Calu3 (cell line): ENCODE measurements at regions of chr9 and their contacts with region 1.

Region 1: DNA sequence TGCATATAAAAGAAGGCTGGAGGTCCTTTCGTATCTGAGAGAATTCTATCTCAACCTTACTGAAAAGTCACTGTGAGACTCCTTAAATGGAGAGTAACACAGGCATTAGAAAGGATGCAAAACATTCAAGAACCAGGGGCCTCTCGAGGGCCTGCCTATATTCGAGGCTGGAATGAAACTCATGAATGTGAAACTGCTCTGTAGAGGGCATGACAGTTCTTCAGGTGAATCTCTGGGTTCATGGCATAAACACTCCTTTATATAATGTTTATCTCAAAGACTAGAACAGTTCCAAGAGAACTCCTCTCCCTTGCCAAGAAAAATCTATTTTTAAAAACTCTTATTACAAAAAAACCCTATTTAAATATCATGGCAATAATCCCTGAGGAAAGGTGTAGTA is 113.9 kb downstream of the SEC61B start:
- DNase-seq: no peak
- H3K4me3 Mint-ChIP-seq: no peak overlapping the region
- H3K27ac Mint-ChIP-seq: no peak overlapping the region
- H3K4me1 Mint-ChIP-seq: no peaks in the 10 kb centered on the region
- H3K27me3 Mint-ChIP-seq: peaks cover 37% of the 10 kb centered on the region
- CTCF ChIP-seq: no peak

Region 2: GRCh38 chr9:99235926-99236634 is 99.9 kb before region 1 on chr9:
- CTCF ChIA-PET with region 1: no interaction called
- intact Hi-C with region 1: no loop called
- DNase-seq: no peak
- H3K4me3 Mint-ChIP-seq: no peak overlapping the region
- H3K27ac Mint-ChIP-seq: no peak overlapping the region
- H3K4me1 Mint-ChIP-seq: no peaks in the 10 kb centered on the region
- H3K27me3 Mint-ChIP-seq: no peaks in the 10 kb centered on the region
- CTCF ChIP-seq: no peak

Region 3: GRCh38 chr9:99272836-99273235 is 63.2 kb before region 1 on chr9:
- CTCF ChIA-PET with region 1: no interaction called
- intact Hi-C with region 1: loop called (anchors 10 kb)
- DNase-seq: no peak
- H3K4me3 Mint-ChIP-seq: no peak overlapping the region
- H3K27ac Mint-ChIP-seq: no peak overlapping the region
- H3K4me1 Mint-ChIP-seq: peaks cover 10% of the 10 kb centered on the region
- H3K27me3 Mint-ChIP-seq: peaks cover 15% of the 10 kb centered on the region
- CTCF ChIP-seq: no peak